ENCODE measurements at regions of chr6 and their contacts with region 1.

Region 1: GRCh38 chr6:170529839-170530469 is 23.2 kb downstream of the PSMB1 start:
- DNase-seq: peak; percentile 84
- H3K4me3 Mint-ChIP-seq: no peak overlapping the region
- H3K27ac Mint-ChIP-seq: no peak overlapping the region
- H3K4me1 Mint-ChIP-seq: no peaks in the 10 kb centered on the region
- H3K27me3 Mint-ChIP-seq: no peaks in the 10 kb centered on the region
- CTCF ChIP-seq: peak; percentile 77

Region 2: GRCh38 chr6:168895102-168895812 is 1634.7 kb before region 1 on chr6:
- CTCF ChIA-PET with region 1: interaction called, 14 read pairs
- POLR2A ChIA-PET with region 1: no interaction called
- intact Hi-C with region 1: no loop called
- DNase-seq: peak; percentile 75
- H3K4me3 Mint-ChIP-seq: peak overlapping the region; percentile 35
- H3K27ac Mint-ChIP-seq: no peak overlapping the region
- H3K4me1 Mint-ChIP-seq: no peaks in the 10 kb centered on the region
- H3K27me3 Mint-ChIP-seq: peaks cover 35% of the 10 kb centered on the region
- CTCF ChIP-seq: peak; percentile 93

Region 3: DNA sequence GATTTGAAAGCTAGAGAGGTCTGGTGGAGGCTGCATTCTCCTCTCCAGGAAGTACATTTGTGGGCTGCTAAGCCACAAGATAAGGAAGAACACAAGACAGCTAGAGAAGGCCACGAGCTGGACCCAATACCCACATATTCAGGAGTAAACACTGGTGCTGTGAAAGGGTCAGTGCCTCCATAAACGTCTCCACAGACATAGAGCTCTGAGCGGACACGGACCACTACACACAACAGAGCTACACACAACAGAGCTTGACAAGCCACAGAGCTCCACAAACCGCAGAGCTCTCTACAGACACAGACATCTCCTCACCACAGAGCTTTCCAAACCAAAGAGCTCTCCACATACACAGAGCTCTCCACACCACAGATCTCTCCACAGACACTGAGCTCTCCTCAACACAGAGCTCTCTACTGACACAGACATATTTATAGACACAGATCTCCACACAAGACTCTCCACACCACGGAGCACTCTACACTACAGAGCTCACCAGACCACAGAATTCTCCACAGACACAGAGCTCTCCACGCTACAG is 726.6 kb before region 1 on chr6:
- CTCF ChIA-PET with region 1: interaction called, 17 read pairs
- POLR2A ChIA-PET with region 1: no interaction called
- intact Hi-C with region 1: no loop called
- DNase-seq: no peak
- H3K4me3 Mint-ChIP-seq: no peak overlapping the region
- H3K27ac Mint-ChIP-seq: no peak overlapping the region
- H3K4me1 Mint-ChIP-seq: no peaks in the 10 kb centered on the region
- H3K27me3 Mint-ChIP-seq: peaks cover 47% of the 10 kb centered on the region
- CTCF ChIP-seq: no peak

Region 4: GRCh38 chr6:170365593-170365992 is 164.4 kb before region 1 on chr6:
- CTCF ChIA-PET with region 1: no interaction called
- POLR2A ChIA-PET with region 1: no interaction called
- intact Hi-C with region 1: no loop called
- DNase-seq: no peak
- H3K4me3 Mint-ChIP-seq: no peak overlapping the region
- H3K27ac Mint-ChIP-seq: no peak overlapping the region
- H3K4me1 Mint-ChIP-seq: no peaks in the 10 kb centered on the region
- H3K27me3 Mint-ChIP-seq: no peaks in the 10 kb centered on the region
- CTCF ChIP-seq: no peak

Region 5: GRCh38 chr6:170542031-170542719 is 12.2 kb after region 1 on chr6:
- CTCF ChIA-PET with region 1: interaction called, 30 read pairs
- POLR2A ChIA-PET with region 1: interaction called, 5 read pairs
- intact Hi-C with region 1: no loop called
- DNase-seq: no peak
- H3K4me3 Mint-ChIP-seq: no peak overlapping the region
- H3K27ac Mint-ChIP-seq: no peak overlapping the region
- H3K4me1 Mint-ChIP-seq: no peaks in the 10 kb centered on the region
- H3K27me3 Mint-ChIP-seq: no peaks in the 10 kb centered on the region
- CTCF ChIP-seq: no peak